Heart left ventricle (tissue), 16 donors: ENCODE measurements at regions of chr1 and their contacts with region 1.

Region 1: GRCh38 chr1:220879076-220879508 is at the start of gene HLX:
- DNase-seq: peak; percentile 94 to 95 (median 95)
- ATAC-seq: peak; percentile 92 to 96 (median 94)
- H3K4me3 ChIP-seq: peak within 1 kb of the TSS; percentile 64 to 99 (median 92)
- H3K27ac ChIP-seq: peak within 1 kb of the TSS; percentile 90 to 99 (median 98)
- H3K4me1 ChIP-seq: peaks cover 0 to 64% (median 34%) of the 10 kb centered on the region in 12 donors
- H3K27me3 ChIP-seq: peaks cover 0 to 39% (median 0%) of the 10 kb centered on the region in 9 donors
- CTCF ChIP-seq: peak in 1 of 12 donors; percentile 8
- POLR2A ChIP-seq: peak; percentile 42 to 90
- total RNA-seq, gene HLX: 3.3 to 14.8 (median 6.7) TPM

Region 2: DNA sequence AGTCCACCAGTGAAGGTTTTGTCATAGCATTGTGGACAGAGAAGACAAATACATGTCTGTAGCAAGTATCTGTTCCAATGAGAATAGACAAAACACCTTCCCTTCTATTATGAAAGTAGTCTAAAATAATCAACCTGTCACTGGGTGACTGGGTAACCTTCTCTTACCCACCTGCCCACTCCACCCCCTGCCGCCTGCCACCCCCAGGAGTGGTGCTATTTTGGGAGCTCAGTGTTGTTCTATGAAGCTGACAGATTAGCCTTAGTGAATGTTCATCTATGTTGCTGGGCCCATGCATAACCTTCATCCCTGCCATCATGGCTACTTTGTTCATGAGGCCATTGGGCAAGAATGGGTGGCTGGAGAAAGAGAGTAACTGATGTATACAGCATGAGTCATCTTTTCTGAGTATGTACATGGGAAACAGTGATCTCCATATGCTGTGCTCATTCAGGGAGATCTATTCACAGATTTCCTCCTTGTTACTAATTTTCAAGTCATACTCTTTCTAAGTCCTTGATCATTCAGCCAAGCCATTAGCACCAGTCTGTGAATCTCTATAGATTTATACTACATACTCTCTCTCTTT is 326.3 kb before region 1 on chr1:
- intact Hi-C with region 1: no loop called
- DNase-seq: peak in 1 of 5 donors; percentile 22
- ATAC-seq: no peak
- H3K4me3 ChIP-seq: no peak overlapping the region
- H3K27ac ChIP-seq: no peak overlapping the region
- H3K4me1 ChIP-seq: peaks cover 0 to 30% (median 3%) of the 10 kb centered on the region in 12 donors
- H3K27me3 ChIP-seq: no peaks in the 10 kb centered on the region
- CTCF ChIP-seq: no peak
- POLR2A ChIP-seq: no peak

Region 3: GRCh38 chr1:220843481-220844011 is 35.5 kb before region 1 on chr1:
- intact Hi-C with region 1: loop called in 1 of 10 experiments (anchors 5 kb)
- DNase-seq: peak in 4 of 5 donors; percentile 73 to 86 (median 83)
- ATAC-seq: peak; percentile 96 to 99 (median 98)
- H3K4me3 ChIP-seq: no peak overlapping the region
- H3K27ac ChIP-seq: peak overlapping the region in 11 of 12 donors; percentile 9 to 79 (median 67)
- H3K4me1 ChIP-seq: peaks cover 0 to 39% (median 15%) of the 10 kb centered on the region in 12 donors
- H3K27me3 ChIP-seq: no peaks in the 10 kb centered on the region
- CTCF ChIP-seq: no peak
- POLR2A ChIP-seq: no peak

Region 4: DNA sequence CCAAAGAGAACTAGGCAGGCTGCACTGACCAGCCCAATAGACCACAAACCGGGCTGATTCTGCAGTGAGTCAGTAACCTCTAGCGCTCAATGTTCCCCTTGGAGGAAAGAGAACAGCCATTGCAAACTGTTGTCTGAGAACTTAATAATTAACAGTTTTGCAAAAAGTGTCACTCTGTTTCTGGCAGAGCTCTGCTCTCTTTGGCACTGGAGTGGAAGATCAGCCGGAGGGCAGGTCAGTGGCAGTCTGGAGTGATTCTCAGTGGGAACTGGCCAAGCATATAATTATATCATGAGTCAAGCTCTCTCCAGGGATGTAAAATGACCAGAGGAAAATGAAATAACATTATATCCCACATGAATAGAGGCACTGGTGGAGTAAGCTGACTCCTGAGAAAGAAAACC is 238.5 kb after region 1 on chr1:
- intact Hi-C with region 1: loop called in 2 of 10 experiments (anchors 5 to 10 kb)
- DNase-seq: peak; percentile 25 to 63 (median 55)
- ATAC-seq: peak; percentile 79 to 93 (median 90)
- H3K4me3 ChIP-seq: no peak overlapping the region
- H3K27ac ChIP-seq: peak overlapping the region; percentile 29 to 90 (median 62)
- H3K4me1 ChIP-seq: peaks cover 0 to 28% (median 24%) of the 10 kb centered on the region in 12 donors
- H3K27me3 ChIP-seq: no peaks in the 10 kb centered on the region
- CTCF ChIP-seq: no peak
- POLR2A ChIP-seq: no peak

Region 5: DNA sequence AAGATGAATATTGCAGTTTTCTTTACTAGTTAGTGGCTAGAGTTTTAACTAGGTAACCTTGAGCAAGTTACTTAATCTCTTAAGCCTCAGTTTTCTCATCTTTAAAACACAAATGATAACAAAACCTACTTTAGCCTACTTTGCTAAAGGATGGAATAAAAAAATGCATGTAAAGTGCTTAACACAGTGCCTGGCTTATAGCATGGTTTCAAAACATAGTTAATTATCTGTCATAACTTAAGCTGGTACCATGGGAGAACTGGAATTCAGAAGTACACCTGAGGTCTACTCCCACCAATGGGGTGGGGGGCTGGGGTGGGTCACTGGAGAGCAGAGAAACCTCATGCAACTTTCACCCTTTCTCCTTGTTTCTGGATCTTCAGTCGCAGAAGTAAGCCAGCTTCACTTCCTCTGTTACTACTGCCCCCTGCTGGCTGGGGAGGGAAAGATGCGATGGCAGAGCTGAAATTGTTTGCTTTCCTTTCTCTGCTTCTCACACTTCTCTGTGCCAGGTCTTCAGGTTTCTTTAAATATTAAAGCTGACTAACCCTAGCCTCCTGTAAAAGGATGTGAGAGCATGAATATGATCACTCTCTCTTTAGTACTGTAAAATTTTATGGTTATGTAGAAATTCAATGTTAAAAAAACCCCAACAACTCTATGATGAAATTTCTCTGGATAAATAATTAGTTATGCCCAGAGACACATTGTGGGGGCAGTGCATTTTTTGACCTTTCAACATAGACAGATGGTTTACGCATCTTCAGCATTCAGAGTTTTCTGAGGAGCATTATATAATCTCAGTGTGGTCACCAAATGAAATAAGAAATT is 324.3 kb after region 1 on chr1:
- intact Hi-C with region 1: loop called in 8 of 10 experiments (anchors 1 to 10 kb)
- DNase-seq: peak; percentile 76 to 86 (median 80)
- ATAC-seq: peak; percentile 44 to 76 (median 71)
- H3K4me3 ChIP-seq: peak overlapping the region in 1 of 12 donors; percentile 1
- H3K27ac ChIP-seq: peak overlapping the region; percentile 2 to 68 (median 39)
- H3K4me1 ChIP-seq: peaks cover 0 to 27% (median 18%) of the 10 kb centered on the region in 12 donors
- H3K27me3 ChIP-seq: no peaks in the 10 kb centered on the region
- CTCF ChIP-seq: peak; percentile 80 to 96 (median 91)
- POLR2A ChIP-seq: no peak

Region 6: GRCh38 chr1:221272940-221273339 is 393.8 kb after region 1 on chr1:
- intact Hi-C with region 1: loop called in 3 of 10 experiments (anchors 10 kb)
- DNase-seq: no peak
- ATAC-seq: no peak
- H3K4me3 ChIP-seq: no peak overlapping the region
- H3K27ac ChIP-seq: no peak overlapping the region
- H3K4me1 ChIP-seq: no peaks in the 10 kb centered on the region
- H3K27me3 ChIP-seq: no peaks in the 10 kb centered on the region
- CTCF ChIP-seq: peak in 7 of 12 donors; percentile 18 to 41 (median 34)
- POLR2A ChIP-seq: no peak